ENCODE measurements at regions of chr3 and their contacts with region 1.

Region 1: DNA sequence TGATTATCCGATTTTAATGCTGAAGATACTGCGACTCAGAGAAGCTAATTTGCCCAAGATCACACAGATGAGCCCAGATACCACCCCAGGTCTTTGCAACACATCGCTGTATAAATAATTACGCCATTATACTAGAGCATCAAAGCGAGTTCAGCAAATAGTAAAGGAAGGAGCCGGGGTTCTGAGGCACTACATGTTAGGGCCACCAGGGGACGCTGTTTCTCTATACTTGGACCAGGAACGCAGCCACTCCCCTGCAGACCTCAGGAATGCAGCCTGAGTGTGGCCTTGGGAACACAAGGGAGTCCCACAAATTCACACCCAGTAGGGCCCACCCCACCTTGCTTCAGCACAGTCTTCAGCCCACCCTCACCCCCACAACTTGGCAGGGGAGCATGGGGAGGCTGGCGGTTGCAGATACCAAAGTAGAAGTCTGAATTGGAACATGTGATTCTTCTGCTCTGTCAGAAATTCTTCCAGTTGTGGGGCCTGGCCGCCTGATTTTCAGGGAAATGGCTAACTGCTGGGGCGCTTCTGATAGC is 57.8 kb upstream of the RYK start:
- DNase-seq: peak; percentile 43
- H3K4me3 Mint-ChIP-seq: no peak overlapping the region
- H3K27ac Mint-ChIP-seq: no peak overlapping the region
- H3K4me1 Mint-ChIP-seq: peaks cover 5% of the 10 kb centered on the region
- H3K27me3 Mint-ChIP-seq: peaks cover 62% of the 10 kb centered on the region

Region 2: DNA sequence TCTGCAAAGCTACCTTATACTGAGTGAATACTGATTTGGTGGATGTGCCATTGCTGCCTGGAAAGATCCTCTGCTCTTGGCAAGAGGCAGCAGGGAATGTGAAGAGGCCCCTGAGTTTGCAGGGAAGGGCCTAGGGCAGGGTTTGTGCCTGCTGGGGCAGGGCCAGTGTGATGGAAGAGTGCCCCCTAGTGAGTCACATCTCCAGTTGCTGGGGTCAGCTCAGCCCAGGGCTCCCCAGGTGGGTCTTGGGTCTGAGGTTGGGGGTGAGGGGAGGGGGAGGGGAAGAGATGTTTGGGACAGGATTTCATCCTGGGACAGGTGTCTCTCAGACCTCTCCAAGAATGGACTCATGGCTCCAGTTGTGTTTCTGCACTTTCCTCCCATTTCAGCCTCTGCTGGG is 70.0 kb after region 1 on chr3:
- intact Hi-C with region 1: loop called (anchors 1 kb)
- DNase-seq: no peak
- H3K4me3 Mint-ChIP-seq: no peak overlapping the region
- H3K27ac Mint-ChIP-seq: no peak overlapping the region
- H3K4me1 Mint-ChIP-seq: peaks cover 13% of the 10 kb centered on the region
- H3K27me3 Mint-ChIP-seq: peaks cover 44% of the 10 kb centered on the region